CD4-positive, alpha-beta memory T cell (primary cell): ENCODE measurements at regions of chr14 and their contacts with region 1.

Region 1: GRCh38 chr14:31510222-31510621 is 22.4 kb upstream of the GPR33 start:
- DNase-seq: peak in 4 of 5 donors; percentile 16 to 24 (median 22)
- H3K4me3 ChIP-seq: no peak overlapping the region
- H3K4me3 Mint-ChIP-seq: no peak overlapping the region
- H3K27ac ChIP-seq: no peak overlapping the region
- H3K27ac Mint-ChIP-seq: no peak overlapping the region
- H3K4me1 ChIP-seq: no peaks in the 10 kb centered on the region
- H3K4me1 Mint-ChIP-seq: no peaks in the 10 kb centered on the region
- H3K27me3 ChIP-seq: no peaks in the 10 kb centered on the region
- H3K27me3 Mint-ChIP-seq: peaks cover 0 to 6% of the 10 kb centered on the region in 2 donors

Region 2: GRCh38 chr14:31806263-31806662 is 296.0 kb after region 1 on chr14:
- CTCF ChIA-PET with region 1: no interaction called
- POLR2A ChIA-PET with region 1: no interaction called
- intact Hi-C with region 1: no loop called
- DNase-seq: no peak
- H3K4me3 ChIP-seq: no peak overlapping the region
- H3K4me3 Mint-ChIP-seq: no peak overlapping the region
- H3K27ac ChIP-seq: no peak overlapping the region
- H3K27ac Mint-ChIP-seq: no peak overlapping the region
- H3K4me1 ChIP-seq: no peaks in the 10 kb centered on the region
- H3K4me1 Mint-ChIP-seq: no peaks in the 10 kb centered on the region
- H3K27me3 ChIP-seq: no peaks in the 10 kb centered on the region
- H3K27me3 Mint-ChIP-seq: no peaks in the 10 kb centered on the region

Region 3: DNA sequence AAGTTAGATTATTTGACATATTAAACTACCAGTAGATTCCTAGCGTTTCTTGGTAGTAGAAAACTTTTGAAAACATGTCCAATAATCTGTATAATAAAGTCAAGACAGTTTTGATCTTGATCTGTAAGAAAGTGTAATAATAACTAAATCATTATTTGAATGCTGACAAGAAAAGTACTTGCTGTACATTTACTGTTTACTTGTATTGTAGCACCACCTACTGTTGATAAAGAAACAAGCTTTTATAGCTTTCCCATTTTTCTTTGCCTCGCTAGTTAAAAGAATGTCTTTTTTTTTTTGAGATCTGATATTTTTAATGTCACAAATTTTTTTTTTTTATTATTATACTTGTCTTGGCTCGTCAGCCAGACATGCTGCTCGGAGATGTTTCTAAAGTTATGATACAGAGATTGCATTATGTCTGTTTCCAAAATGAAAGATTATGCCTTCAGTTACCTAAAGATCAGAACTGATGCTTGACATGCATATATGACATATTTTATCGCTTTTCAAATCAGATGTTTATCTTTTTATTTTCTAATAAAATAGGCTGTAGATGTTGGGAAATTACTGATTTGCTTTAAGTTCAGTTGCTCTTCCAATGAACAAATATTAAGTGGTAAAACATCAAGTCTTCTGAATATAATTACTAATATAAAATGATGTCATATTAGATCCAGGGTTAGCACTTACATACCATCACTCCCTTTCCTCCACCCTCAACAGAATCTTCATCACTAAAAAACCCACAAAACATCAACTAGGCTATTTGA is 959.4 kb after region 1 on chr14:
- CTCF ChIA-PET with region 1: no interaction called
- POLR2A ChIA-PET with region 1: no interaction called
- intact Hi-C with region 1: loop called (anchors 5 kb)
- DNase-seq: peak in 2 of 5 donors; percentile 2 to 5
- H3K4me3 ChIP-seq: no peak overlapping the region
- H3K4me3 Mint-ChIP-seq: no peak overlapping the region
- H3K27ac ChIP-seq: no peak overlapping the region
- H3K27ac Mint-ChIP-seq: no peak overlapping the region
- H3K4me1 ChIP-seq: no peaks in the 10 kb centered on the region
- H3K4me1 Mint-ChIP-seq: no peaks in the 10 kb centered on the region
- H3K27me3 ChIP-seq: no peaks in the 10 kb centered on the region
- H3K27me3 Mint-ChIP-seq: peaks cover 2 to 5% of the 10 kb centered on the region in 2 donors